HEK293 (cell line): ENCODE measurements at regions of chr10 and their contacts with region 1.

Region 1: GRCh38 chr10:104291439-104291951 is 22.5 kb downstream of the GSTO2 start:
- H3K4me3 ChIP-seq: no peak overlapping the region
- H3K27ac ChIP-seq: no peak overlapping the region
- H3K4me1 ChIP-seq: no peaks in the 10 kb centered on the region; the same call in 1 of the 2 replicates
- CTCF ChIP-seq: peak; percentile 98

Region 2: GRCh38 chr10:103895411-103896186 is 395.9 kb before region 1 on chr10:
- CTCF ChIA-PET with region 1: no interaction called
- POLR2A ChIA-PET with region 1: no interaction called
- H3K4me3 ChIP-seq: no peak overlapping the region
- H3K27ac ChIP-seq: peak overlapping the region; percentile 7; the same call in 1 of the 2 replicates
- H3K4me1 ChIP-seq: peaks cover 23% of the 10 kb centered on the region
- CTCF ChIP-seq: no peak

Region 3: DNA sequence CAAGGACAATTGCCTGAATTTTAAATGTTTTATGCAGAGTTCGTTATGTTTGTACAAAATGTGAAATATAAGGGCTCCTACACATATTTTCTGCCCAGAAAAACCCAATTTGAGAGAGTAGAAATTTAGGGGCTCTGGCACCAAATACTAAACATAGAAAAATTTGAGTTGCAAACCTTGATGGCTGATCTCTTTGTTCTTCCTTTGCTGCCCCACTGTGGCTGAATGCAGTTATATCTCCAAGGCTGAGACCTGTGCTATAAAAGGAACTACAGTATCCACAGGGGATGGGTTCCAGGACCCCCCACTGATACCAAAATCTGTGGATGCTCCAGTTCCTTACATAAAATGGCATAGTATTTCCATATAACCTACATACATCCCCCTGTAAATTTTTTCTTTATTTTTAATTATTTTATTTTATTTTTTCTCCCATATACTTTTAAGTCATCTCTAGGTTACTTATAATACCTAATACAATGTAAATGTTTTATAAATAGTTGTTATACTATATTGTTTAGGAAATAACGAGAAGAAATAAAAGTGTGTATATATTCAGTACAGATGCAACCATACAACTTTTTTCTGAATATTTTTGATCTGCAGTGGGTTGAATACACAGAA is 81.8 kb before region 1 on chr10:
- CTCF ChIA-PET with region 1: no interaction called
- POLR2A ChIA-PET with region 1: no interaction called
- H3K4me3 ChIP-seq: no peak overlapping the region
- H3K27ac ChIP-seq: no peak overlapping the region
- H3K4me1 ChIP-seq: no peaks in the 10 kb centered on the region
- CTCF ChIP-seq: no peak

Region 4: GRCh38 chr10:104240078-104240477 is 51.4 kb before region 1 on chr10:
- CTCF ChIA-PET with region 1: no interaction called
- POLR2A ChIA-PET with region 1: no interaction called
- H3K4me3 ChIP-seq: no peak overlapping the region
- H3K27ac ChIP-seq: no peak overlapping the region
- H3K4me1 ChIP-seq: no peaks in the 10 kb centered on the region
- CTCF ChIP-seq: no peak

Region 5: DNA sequence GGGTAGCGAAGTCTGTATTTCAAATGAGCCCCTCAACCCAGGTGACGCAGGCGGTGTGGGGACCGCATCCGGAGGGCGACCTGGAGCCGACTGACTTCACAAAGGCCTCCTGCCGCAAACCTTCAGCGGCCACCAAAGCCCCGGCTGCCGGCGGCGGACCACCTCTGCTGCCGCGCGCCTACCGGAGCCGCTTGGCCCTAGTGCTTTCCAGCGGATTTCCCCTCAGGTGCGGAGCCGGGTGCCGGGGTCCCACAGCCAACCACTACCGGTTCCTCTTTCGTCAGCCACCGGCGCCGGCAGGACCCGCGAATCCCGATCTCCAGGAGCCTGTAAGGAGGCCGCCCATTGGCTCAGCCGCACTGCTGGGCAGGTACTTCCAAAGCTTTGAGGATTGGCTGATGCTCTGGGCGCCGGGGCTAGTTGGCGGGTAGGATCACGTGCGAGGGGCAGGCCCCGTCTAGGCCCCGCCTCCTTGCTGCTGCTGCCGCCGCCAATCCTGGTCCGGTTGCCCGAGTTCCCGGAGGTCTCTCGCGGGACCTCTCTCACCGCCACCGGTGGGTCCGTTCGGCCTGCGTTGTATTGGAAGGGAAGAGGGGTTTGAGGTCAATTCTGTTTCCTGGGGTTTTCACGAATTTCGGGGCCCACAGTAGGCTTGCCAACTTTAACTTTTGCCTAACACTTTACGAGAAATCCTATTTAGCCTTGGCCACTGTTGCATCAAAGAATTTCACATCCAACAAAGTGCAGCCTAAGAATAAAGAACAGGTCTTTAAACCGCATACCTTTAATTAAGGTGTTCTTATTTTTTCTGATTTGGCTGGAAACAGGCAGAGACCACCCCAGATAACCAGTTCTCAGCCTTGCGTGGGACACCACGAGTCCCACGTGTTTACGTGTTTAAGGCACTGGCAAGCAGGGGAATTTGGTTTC is 22.5 kb before region 1 on chr10 and contains the start of gene GSTO2:
- CTCF ChIA-PET with region 1: interaction called, 202 read pairs
- POLR2A ChIA-PET with region 1: no interaction called
- H3K4me3 ChIP-seq: peak within 1 kb of the TSS; percentile 94
- H3K27ac ChIP-seq: peak within 1 kb of the TSS; percentile 13; the same call in 1 of the 2 replicates
- H3K4me1 ChIP-seq: 0 out of 2 replicates have a peak, but pooled peaks cover 2% of the 10 kb centered on the region
- CTCF ChIP-seq: 0 out of 2 replicates have a peak, but pooled peaks have one; percentile 9

Region 6: DNA sequence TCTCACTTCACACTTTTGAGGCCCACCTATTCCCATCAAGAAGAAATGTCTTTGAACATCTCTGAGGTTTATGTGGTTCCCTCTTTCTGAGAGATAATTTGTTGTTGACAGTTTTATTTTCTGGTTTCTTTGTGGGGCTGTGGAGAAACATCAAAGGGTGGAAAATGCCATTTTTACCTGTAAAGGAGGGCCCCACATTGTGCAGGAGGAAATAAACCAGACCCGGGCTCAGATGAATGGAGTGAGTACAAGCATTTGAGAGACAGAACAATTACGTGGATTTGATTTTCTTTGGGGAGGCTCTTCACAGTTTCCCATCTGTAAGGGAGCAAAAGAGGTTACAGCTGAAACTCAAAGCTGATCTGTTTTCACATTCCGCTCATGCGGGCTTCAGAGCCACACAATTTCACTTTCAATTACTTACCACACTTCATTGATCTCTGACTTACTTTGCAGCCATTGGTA is 17.0 kb after region 1 on chr10:
- CTCF ChIA-PET with region 1: interaction called, 125 read pairs
- POLR2A ChIA-PET with region 1: no interaction called
- H3K4me3 ChIP-seq: no peak overlapping the region
- H3K27ac ChIP-seq: no peak overlapping the region
- H3K4me1 ChIP-seq: no peaks in the 10 kb centered on the region
- CTCF ChIP-seq: no peak

Region 7: GRCh38 chr10:104322416-104322782 is 30.9 kb after region 1 on chr10:
- CTCF ChIA-PET with region 1: interaction called, 17 read pairs
- POLR2A ChIA-PET with region 1: no interaction called
- H3K4me3 ChIP-seq: no peak overlapping the region
- H3K27ac ChIP-seq: no peak overlapping the region
- H3K4me1 ChIP-seq: peaks cover 2% of the 10 kb centered on the region; the same call in 1 of the 2 replicates
- CTCF ChIP-seq: no peak

Region 8: GRCh38 chr10:104337974-104338735 is 46.7 kb after region 1 on chr10 and contains the start of gene ITPRIP:
- CTCF ChIA-PET with region 1: interaction called, 289 read pairs
- POLR2A ChIA-PET with region 1: interaction called, 4 read pairs
- H3K4me3 ChIP-seq: peak within 1 kb of the TSS; percentile 84
- H3K27ac ChIP-seq: peak within 1 kb of the TSS; percentile 98
- H3K4me1 ChIP-seq: peaks cover 15% of the 10 kb centered on the region
- CTCF ChIP-seq: peak; percentile 92